ENCODE measurements at regions of chr18 and their contacts with region 1.

Region 1: GRCh38 chr18:74081966-74082741 is 65.5 kb downstream of the FBXO15 start:
- DNase-seq: peak; percentile 84
- ATAC-seq: peak; percentile 90
- H3K4me3 Mint-ChIP-seq: peak overlapping the region; percentile 65
- H3K27ac Mint-ChIP-seq: peak overlapping the region; percentile 98
- H3K4me1 Mint-ChIP-seq: peaks cover 20% of the 10 kb centered on the region
- H3K27me3 Mint-ChIP-seq: no peaks in the 10 kb centered on the region
- CTCF ChIP-seq: peak; percentile 69

Region 2: GRCh38 chr18:74040459-74041332 is 41.5 kb before region 1 on chr18:
- CTCF ChIA-PET with region 1: interaction called, 13 read pairs
- POLR2A ChIA-PET with region 1: no interaction called
- intact Hi-C with region 1: no loop called
- DNase-seq: peak; percentile 85
- ATAC-seq: peak; percentile 99
- H3K4me3 Mint-ChIP-seq: no peak overlapping the region
- H3K27ac Mint-ChIP-seq: no peak overlapping the region
- H3K4me1 Mint-ChIP-seq: no peaks in the 10 kb centered on the region
- H3K27me3 Mint-ChIP-seq: no peaks in the 10 kb centered on the region
- CTCF ChIP-seq: peak; percentile 71

Region 3: DNA sequence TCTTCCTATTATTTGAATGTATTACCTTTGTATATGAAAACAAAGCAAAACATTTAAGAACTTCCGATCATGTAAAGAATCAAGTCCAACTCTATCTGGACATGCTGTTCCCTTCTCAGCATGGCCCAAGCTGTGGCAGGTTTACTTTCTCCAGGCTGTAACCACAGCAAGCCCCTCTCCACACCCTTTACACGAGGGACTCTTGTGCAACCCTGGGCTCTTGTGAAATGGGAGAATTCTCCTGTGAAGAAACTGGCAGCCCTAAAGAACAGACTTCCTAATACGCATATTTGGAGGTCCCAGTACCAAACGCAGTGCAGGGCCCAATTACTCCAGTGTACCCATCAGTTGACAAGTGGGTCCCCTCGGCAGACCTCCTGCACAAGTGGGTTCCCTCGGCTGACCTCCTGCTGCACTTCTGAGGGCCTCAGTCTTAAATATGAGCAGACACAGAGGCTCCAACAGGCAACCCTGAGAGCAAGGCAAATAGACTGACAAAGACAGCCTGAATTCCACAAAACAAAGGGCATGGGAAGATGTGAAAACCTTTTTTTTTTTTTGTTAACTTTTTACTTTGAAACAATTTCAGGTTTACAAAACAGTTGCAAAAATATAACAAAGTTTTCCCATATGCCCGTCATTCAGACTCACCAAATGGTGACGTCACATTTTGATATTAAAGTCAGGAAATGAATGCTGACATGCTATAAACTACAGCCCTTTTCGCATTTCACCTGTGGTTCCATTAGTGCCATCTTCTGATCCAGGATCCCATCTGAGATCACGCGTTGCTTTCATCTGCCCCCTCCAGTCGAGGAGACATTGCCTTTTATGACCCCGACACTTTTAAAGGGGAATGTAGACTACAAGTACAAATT is 12.7 kb before region 1 on chr18:
- CTCF ChIA-PET with region 1: interaction called, 35 read pairs
- POLR2A ChIA-PET with region 1: interaction called, 24 read pairs
- intact Hi-C with region 1: no loop called
- DNase-seq: no peak
- ATAC-seq: no peak
- H3K4me3 Mint-ChIP-seq: no peak overlapping the region
- H3K27ac Mint-ChIP-seq: no peak overlapping the region
- H3K4me1 Mint-ChIP-seq: peaks cover 26% of the 10 kb centered on the region
- H3K27me3 Mint-ChIP-seq: no peaks in the 10 kb centered on the region
- CTCF ChIP-seq: no peak

Region 4: GRCh38 chr18:74116633-74117554 is 34.7 kb after region 1 on chr18:
- CTCF ChIA-PET with region 1: interaction called, 28 read pairs
- POLR2A ChIA-PET with region 1: no interaction called
- intact Hi-C with region 1: loop called (anchors 5 kb)
- DNase-seq: peak; percentile 69
- ATAC-seq: peak; percentile 66
- H3K4me3 Mint-ChIP-seq: no peak overlapping the region
- H3K27ac Mint-ChIP-seq: no peak overlapping the region
- H3K4me1 Mint-ChIP-seq: peaks cover 27% of the 10 kb centered on the region
- H3K27me3 Mint-ChIP-seq: no peaks in the 10 kb centered on the region
- CTCF ChIP-seq: peak; percentile 64

Region 5: DNA sequence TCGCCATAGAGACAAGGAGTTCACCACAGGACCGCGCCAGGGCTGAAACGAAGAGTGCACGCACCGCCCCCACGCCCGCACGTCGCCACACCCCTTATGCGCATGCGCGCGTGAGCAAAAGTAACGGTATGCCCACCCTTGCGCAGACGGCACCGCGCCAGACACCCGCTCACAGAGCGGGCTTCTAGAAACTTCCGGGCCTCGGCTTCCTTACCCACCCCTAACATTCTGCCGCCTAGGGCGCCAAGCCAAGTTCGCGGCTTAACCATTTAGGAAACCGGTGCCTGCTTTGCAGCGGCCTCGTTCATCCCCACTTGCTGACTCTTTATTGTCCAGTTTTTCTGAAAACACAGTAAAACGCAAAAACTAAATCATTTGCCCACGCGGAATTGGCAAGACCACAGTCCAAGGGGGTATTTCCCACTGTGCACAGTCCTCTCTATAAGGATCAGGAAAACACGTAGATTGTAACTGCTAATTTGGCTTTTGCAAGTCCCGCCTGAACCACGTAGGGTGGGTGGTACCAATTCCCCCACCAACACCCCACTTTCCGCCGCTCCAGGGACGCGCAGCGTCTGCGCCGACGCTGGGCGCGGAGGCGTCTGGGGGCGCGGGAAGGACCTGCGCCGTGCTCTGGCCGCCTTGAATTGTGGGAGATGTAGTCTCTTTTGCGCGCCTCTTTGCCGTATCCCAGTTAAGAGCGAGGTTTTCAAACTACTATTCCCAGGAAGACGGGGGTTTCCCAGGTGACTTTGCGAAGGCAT is 65.8 kb after region 1 on chr18 and contains the starts of genes FBXO15 and TIMM21:
- CTCF ChIA-PET with region 1: interaction called, 12 read pairs
- POLR2A ChIA-PET with region 1: no interaction called
- intact Hi-C with region 1: no loop called
- DNase-seq: peak; percentile 99
- ATAC-seq: peak; percentile 87
- H3K4me3 Mint-ChIP-seq: peak within 1 kb of the TSS; percentile 98
- H3K27ac Mint-ChIP-seq: peak within 1 kb of the TSS; percentile 99
- H3K4me1 Mint-ChIP-seq: peaks cover 43% of the 10 kb centered on the region
- H3K27me3 Mint-ChIP-seq: peaks cover 2% of the 10 kb centered on the region
- CTCF ChIP-seq: no peak
- total RNA-seq, gene FBXO15: 2.1 TPM
- total RNA-seq, gene TIMM21: 70.2 to 71.2 TPM